ENCODE measurements at regions of chr20 and their contacts with region 1.

Region 1: GRCh38 chr20:44866703-44867335 is 18.7 kb upstream of the YWHAB start:
- DNase-seq: no peak
- H3K4me3 ChIP-seq: no peak overlapping the region
- H3K27ac ChIP-seq: no peak overlapping the region
- H3K4me1 ChIP-seq: no peaks in the 10 kb centered on the region
- H3K27me3 ChIP-seq: no peaks in the 10 kb centered on the region
- CTCF ChIP-seq: no peak
- POLR2A ChIP-seq: no peak

Region 2: GRCh38 chr20:44747166-44748004 is 119.4 kb before region 1 on chr20:
- intact Hi-C with region 1: loop called (anchors 1 kb)
- DNase-seq: peak; percentile 71
- H3K4me3 ChIP-seq: no peak overlapping the region
- H3K27ac ChIP-seq: no peak overlapping the region
- H3K4me1 ChIP-seq: no peaks in the 10 kb centered on the region
- H3K27me3 ChIP-seq: no peaks in the 10 kb centered on the region
- CTCF ChIP-seq: peak in 3 of 4 experiments; percentile 61 to 71 (median 66)
- POLR2A ChIP-seq: no peak

Measured in prostate gland (tissue), 2 donors.